ENCODE measurements at regions of chr1 and their contacts with region 1.

Region 1: DNA sequence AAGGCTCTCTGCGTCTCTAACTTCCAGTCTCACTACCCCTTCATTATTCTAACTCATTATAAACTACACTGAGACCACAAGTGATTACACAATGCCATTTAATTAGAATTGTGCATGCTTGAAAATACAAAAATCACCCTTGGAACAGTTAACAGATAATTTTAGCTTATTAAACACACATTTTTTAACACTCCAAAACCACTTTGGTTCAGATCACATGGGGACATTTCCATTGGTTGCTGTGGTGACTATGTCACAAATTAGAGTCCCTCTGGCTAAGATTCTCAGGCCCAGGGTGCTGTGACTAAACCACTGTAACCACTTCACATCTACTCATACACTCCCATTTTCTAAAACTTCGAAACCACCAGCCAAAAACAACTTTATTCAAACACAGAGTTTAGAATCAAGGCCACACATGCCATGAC is 43.0 kb downstream of the JAK1 start:
- DNase-seq: peak; percentile 64
- H3K4me3 Mint-ChIP-seq: no peak overlapping the region
- H3K27ac Mint-ChIP-seq: peak overlapping the region; percentile 73
- H3K4me1 Mint-ChIP-seq: peaks cover 94% of the 10 kb centered on the region
- H3K27me3 Mint-ChIP-seq: no peaks in the 10 kb centered on the region

Region 2: GRCh38 chr1:64828829-64829228 is 94.5 kb before region 1 on chr1:
- CTCF ChIA-PET with region 1: no interaction called
- POLR2A ChIA-PET with region 1: no interaction called
- intact Hi-C with region 1: no loop called
- DNase-seq: no peak
- H3K4me3 Mint-ChIP-seq: no peak overlapping the region
- H3K27ac Mint-ChIP-seq: peak overlapping the region; percentile 71
- H3K4me1 Mint-ChIP-seq: peaks cover 45% of the 10 kb centered on the region
- H3K27me3 Mint-ChIP-seq: no peaks in the 10 kb centered on the region

Region 3: DNA sequence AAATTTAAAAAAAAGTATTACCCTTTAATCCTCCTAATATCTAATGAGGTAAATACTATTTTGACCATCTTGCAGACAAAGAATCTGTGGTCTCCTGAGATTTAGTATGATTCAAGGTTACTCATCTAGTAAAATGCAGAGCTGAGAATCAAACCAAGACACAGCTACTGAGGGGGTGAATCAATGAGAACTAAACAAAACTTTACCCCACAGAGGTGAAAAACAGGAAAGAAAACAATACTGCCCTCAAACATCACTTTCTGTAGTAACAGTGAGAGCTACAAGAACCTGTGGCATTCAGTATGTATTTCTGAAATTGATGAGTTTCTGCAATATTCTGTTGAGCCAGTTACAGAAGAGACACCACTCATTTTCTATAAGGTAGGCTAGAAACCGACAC is 42.0 kb before region 1 on chr1:
- CTCF ChIA-PET with region 1: interaction called, 5 read pairs
- POLR2A ChIA-PET with region 1: interaction called, 3 read pairs
- intact Hi-C with region 1: loop called (anchors 1 kb)
- DNase-seq: no peak
- H3K4me3 Mint-ChIP-seq: no peak overlapping the region
- H3K27ac Mint-ChIP-seq: no peak overlapping the region
- H3K4me1 Mint-ChIP-seq: peaks cover 68% of the 10 kb centered on the region
- H3K27me3 Mint-ChIP-seq: no peaks in the 10 kb centered on the region

Region 4: GRCh38 chr1:64906447-64906846 is 16.9 kb before region 1 on chr1:
- CTCF ChIA-PET with region 1: no interaction called
- POLR2A ChIA-PET with region 1: interaction called, 17 read pairs
- intact Hi-C with region 1: loop called (anchors 1 kb)
- DNase-seq: peak; percentile 59
- H3K4me3 Mint-ChIP-seq: no peak overlapping the region
- H3K27ac Mint-ChIP-seq: peak overlapping the region; percentile 58
- H3K4me1 Mint-ChIP-seq: peaks cover 91% of the 10 kb centered on the region
- H3K27me3 Mint-ChIP-seq: no peaks in the 10 kb centered on the region

Region 5: GRCh38 chr1:64948905-64949833 is 25.9 kb after region 1 on chr1:
- CTCF ChIA-PET with region 1: interaction called, 3 read pairs
- POLR2A ChIA-PET with region 1: interaction called, 3 read pairs
- intact Hi-C with region 1: loop called (anchors 1 kb)
- DNase-seq: peak; percentile 60
- H3K4me3 Mint-ChIP-seq: peak overlapping the region; percentile 18
- H3K27ac Mint-ChIP-seq: peak overlapping the region; percentile 86
- H3K4me1 Mint-ChIP-seq: peaks cover 70% of the 10 kb centered on the region
- H3K27me3 Mint-ChIP-seq: no peaks in the 10 kb centered on the region

Region 6: DNA sequence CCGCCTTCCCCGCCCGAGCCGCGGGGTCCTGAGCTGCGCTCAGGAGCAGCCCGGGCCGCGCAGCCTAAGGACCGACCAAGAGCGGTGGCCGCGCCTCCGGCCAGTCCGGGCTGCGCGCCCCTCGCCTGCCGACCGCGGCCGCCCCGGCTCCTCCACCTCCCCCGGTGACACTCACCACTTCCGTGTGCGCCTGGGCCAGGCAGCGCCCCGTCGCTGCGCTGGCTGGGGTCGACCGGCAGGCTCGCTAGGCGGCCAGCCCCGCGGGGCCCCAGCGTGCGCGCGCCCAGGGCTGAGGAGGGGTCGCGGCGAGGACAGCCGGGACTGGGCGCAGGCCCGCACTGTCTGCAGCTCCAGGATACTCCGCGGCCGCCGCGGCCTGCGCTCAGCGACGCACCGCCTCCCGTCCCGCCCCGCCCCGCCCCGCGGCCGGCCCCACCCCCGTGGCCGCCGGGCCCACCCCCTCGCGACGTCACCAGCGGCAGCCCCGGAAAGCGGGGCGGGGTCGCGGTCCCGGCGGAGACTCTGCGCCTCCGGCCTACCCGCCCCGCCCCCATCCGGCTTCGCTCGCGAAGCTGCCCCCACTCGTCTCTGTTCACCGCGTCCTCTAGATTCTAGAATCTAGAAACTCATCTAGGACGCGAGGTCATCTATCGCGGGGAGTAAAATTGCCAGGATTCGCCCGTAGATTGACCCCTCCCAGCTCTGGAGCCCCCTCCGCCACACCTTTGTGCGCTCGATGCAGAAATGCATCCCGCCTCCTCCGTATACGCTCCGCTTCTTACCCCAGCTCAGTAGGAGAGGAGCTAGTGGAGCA is 43.1 kb after region 1 on chr1 and contains the start of gene JAK1:
- CTCF ChIA-PET with region 1: interaction called, 7 read pairs
- POLR2A ChIA-PET with region 1: interaction called, 35 read pairs
- intact Hi-C with region 1: loop called (anchors 1 kb)
- DNase-seq: peak; percentile 89
- H3K4me3 Mint-ChIP-seq: peak within 1 kb of the TSS; percentile 91
- H3K27ac Mint-ChIP-seq: peak within 1 kb of the TSS; percentile 72
- H3K4me1 Mint-ChIP-seq: peaks cover 48% of the 10 kb centered on the region
- H3K27me3 Mint-ChIP-seq: no peaks in the 10 kb centered on the region
- total RNA-seq, gene JAK1: 115 to 128 TPM

Region 7: GRCh38 chr1:65036545-65037180 is 113.4 kb after region 1 on chr1:
- CTCF ChIA-PET with region 1: no interaction called
- POLR2A ChIA-PET with region 1: no interaction called
- intact Hi-C with region 1: loop called (anchors 2 kb)
- DNase-seq: no peak
- H3K4me3 Mint-ChIP-seq: no peak overlapping the region
- H3K27ac Mint-ChIP-seq: no peak overlapping the region
- H3K4me1 Mint-ChIP-seq: peaks cover 12% of the 10 kb centered on the region
- H3K27me3 Mint-ChIP-seq: no peaks in the 10 kb centered on the region